Heart left ventricle (tissue), 16 donors: ENCODE measurements at regions of chr2 and their contacts with region 1.

Region 1: DNA sequence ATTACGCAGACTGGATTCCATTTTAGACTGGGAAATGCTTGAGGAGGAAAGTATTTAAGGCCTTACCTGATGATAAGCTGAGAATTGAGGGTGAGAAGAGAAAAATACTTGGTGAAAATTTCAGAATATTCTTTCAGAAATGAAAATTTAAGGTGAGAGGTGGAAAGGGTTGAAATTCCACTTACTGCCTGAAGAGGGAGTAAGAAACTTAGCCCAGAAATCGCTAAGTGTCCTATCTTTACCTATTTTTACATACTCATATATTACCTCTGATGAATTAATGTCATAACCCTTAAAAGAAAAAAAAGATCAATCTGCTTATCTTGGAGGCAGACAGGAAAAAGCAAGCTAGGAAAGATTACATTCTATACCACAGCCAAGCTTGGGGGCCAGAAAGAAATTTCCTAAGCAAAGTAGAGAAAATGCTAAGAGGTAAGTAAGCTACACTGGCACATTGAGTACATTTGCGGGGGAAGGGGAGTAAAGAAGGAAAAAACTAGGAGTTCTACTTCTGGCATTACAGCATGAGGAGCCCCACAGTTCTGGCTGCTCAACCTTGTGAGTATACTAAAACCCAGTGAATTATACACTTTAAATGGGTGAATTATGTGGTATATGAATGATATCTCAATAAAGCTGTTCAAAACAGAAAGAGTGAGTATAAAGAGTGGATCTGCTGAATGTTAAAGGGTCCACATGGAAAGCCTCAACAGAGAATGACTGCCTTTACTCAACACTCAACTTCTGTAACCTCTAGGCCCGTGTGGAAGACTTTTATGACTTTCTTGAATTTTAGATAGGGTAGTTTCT is 33.8 kb downstream of the SMC6 start:
- DNase-seq: no peak
- ATAC-seq: no peak
- H3K4me3 ChIP-seq: no peak overlapping the region
- H3K27ac ChIP-seq: no peak overlapping the region
- H3K4me1 ChIP-seq: no peaks in the 10 kb centered on the region
- H3K27me3 ChIP-seq: no peaks in the 10 kb centered on the region
- CTCF ChIP-seq: peak; percentile 74 to 93 (median 82)
- POLR2A ChIP-seq: no peak

Region 2: GRCh38 chr2:17821535-17822444 is 102.0 kb after region 1 on chr2:
- intact Hi-C with region 1: loop called in 2 of 10 experiments (anchors 5 to 10 kb)
- DNase-seq: no peak
- ATAC-seq: peak; percentile 41 to 73 (median 58)
- H3K4me3 ChIP-seq: no peak overlapping the region
- H3K27ac ChIP-seq: peak overlapping the region; percentile 50 to 90 (median 78)
- H3K4me1 ChIP-seq: peaks cover 8 to 37% (median 33%) of the 10 kb centered on the region in 12 donors
- H3K27me3 ChIP-seq: no peaks in the 10 kb centered on the region
- CTCF ChIP-seq: no peak
- POLR2A ChIP-seq: no peak

Region 3: GRCh38 chr2:17830053-17831034 is 110.6 kb after region 1 on chr2:
- intact Hi-C with region 1: loop called (anchors 2 to 10 kb)
- DNase-seq: peak; percentile 72 to 84 (median 79)
- ATAC-seq: peak; percentile 84 to 98 (median 96)
- H3K4me3 ChIP-seq: peak overlapping the region in 10 of 12 donors; percentile 4 to 40 (median 24)
- H3K27ac ChIP-seq: no peak overlapping the region
- H3K4me1 ChIP-seq: peaks cover 0 to 12% (median 5%) of the 10 kb centered on the region in 12 donors
- H3K27me3 ChIP-seq: peaks cover 0 to 16% (median 0%) of the 10 kb centered on the region in 9 donors
- CTCF ChIP-seq: peak; percentile 84 to 97 (median 92)
- POLR2A ChIP-seq: no peak

Region 4: DNA sequence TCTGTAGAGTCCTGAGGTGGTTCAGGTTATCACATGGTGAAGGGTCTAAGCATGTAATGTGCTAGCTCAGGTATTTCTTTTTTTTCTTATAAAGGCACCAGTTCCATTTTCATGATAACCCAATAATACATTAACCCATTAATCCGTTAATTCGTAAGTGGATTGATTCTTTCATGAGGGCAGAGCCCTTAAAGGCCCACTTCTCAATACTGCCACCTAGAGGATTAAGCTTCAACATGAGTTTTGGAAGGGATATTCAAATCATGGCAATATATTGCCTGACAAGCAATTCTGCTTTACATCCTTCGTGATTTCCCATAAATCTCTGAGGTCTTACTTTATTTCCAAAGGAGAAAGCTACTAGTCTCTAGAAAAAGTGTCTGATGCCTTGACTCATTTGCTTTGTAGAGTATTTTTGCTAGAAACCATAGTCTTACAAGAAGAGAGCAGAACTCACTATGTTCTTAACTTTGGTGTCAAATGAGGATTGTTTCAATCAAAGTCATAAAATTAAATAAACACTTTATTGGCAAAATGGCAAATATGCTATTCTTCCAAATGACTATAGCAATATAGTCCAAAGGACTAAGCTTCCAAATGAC is 430.0 kb after region 1 on chr2:
- intact Hi-C with region 1: loop called in 1 of 10 experiments (anchors 10 kb)
- DNase-seq: no peak
- ATAC-seq: peak in 1 of 4 donors; percentile 41
- H3K4me3 ChIP-seq: no peak overlapping the region
- H3K27ac ChIP-seq: no peak overlapping the region
- H3K4me1 ChIP-seq: no peaks in the 10 kb centered on the region
- H3K27me3 ChIP-seq: no peaks in the 10 kb centered on the region
- CTCF ChIP-seq: peak; percentile 59 to 88 (median 73)
- POLR2A ChIP-seq: no peak

Region 5: GRCh38 chr2:18178736-18179349 is 459.1 kb after region 1 on chr2:
- intact Hi-C with region 1: loop called in 1 of 10 experiments (anchors 10 kb)
- DNase-seq: no peak
- ATAC-seq: peak in 1 of 4 donors; percentile 80
- H3K4me3 ChIP-seq: no peak overlapping the region
- H3K27ac ChIP-seq: no peak overlapping the region
- H3K4me1 ChIP-seq: peaks cover 0 to 6% (median 0%) of the 10 kb centered on the region in 12 donors
- H3K27me3 ChIP-seq: no peaks in the 10 kb centered on the region
- CTCF ChIP-seq: peak; percentile 60 to 86 (median 78)
- POLR2A ChIP-seq: no peak